Posterior cingulate gyrus (tissue), 11 donors: ENCODE measurements at regions of chr2 and their contacts with region 1.

Region 1: DNA sequence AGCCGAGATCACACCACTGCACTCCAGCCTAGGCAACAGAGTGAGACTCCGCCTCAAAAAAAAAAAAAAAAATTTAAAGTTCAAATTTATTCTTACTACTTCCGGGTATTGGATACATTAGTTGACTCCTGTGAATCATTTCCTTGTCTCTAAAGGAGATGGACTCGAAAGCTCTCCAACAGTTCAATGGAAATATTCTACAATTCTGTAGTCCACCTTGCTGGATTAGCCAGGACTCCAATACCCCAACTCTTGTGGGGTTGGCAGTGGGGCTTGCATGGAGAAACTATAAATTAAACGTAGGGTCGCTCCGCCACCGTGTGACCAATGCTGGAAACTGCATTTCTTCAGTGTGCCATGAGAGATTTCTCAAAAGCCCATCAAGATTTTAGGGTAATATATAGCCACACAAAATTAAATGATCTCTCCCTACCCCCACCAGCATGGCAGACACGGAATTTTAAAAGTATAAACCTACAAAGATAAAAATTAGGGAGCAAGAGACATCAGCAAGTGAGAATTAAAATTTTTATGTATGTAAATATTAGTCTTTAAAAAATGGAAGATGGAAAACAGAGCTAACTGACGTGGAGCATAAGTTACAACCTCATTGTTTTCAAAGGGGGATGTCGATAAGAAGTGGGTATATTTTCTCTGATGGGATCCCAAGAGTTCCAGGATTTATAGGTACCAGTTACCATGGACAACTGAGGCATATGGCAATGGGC is 27.8 kb upstream of the GAREM2 start:
- DNase-seq: peak; percentile 45 to 94 (median 74)

Region 2: DNA sequence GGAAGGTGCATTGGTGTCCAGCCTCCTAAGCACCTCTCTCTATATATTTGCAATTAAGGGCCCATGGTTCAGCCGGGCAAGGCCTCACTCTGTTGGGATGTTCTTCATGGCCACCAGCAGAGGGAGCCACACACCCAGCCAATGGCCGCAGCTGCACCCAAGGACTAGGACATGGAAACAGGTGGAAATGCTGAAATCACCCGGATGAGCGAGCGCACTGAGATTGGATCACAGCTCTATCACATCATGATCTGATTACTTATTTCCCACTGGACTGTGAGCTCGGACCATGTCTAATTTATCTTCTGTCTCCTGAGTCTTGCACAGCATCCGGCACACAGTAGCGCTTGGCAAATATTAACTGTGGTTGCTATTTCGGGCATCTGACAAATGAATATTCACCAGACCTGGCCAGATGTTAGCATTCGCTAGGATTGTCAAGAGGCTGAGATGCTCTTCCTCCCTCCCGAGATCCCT is 194.0 kb before region 1 on chr2:
- intact Hi-C with region 1: loop called (anchors 1 kb)
- DNase-seq: peak; percentile 85 to 98 (median 89)

Region 3: DNA sequence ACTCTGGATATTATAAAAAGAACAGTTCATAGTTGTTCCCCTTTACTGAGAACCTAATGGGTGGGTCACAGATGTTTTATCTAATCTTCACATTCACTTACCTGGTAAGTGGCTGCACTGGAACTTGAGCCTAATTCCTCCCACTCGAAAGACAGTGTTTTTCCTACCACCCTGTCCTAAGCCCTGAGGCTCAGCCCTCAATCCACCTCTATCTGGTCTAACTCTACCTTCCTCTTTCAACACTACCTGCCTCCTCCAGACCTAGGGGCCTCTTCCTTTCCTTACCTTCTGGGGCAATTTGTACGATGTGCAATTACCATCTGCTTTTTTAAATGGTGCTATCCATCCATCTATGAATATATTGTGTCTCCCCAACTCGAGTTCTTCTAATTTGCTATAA is 153.2 kb before region 1 on chr2:
- intact Hi-C with region 1: loop called (anchors 5 kb)
- DNase-seq: no peak

Region 4: GRCh38 chr2:26088032-26088643 is 57.0 kb before region 1 on chr2:
- intact Hi-C with region 1: loop called (anchors 1 kb)
- DNase-seq: peak in 3 of 10 donors; percentile 24 to 33 (median 29)

Region 5: DNA sequence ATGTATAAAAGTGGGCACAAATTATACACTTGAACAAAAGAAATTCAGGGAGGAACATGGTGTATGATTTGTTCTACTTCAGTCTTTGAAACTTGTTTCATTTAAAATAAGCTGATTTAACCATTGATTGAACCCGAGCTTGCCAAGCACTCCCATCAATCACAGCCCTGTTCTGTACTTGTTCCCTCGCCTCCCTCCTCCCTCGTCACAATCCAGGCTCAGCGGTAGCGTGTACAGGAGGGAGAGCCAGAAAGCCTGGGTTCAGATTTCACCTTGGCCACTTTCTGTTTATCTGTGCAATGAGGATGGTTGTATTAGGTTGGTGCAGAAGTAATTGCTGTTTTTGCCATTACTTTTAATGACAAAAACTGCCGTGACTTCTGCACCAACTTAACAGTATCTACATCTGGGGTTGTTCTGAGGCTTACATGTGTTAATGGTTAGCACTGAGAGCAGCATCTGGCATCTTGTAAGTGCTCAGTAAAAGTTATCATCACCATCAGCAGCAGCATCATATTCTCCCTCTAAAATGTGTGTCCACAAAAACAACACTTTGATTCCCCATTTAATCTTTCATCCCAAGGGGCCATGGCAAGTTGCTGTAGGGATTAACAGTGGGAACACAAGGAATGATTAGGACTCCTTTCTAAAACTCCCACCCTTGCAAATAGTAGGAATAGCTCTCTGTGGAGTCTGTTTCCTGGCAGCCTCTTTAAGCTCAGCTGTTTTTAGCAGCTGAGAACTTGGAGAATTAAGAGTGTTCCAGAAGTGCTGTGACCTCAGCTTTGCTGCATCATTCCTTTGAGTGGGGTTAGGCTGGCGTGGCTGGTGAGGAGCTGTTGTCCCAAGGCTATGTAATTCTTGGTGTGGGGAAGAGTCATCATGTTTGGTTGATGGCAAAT is 707.5 kb after region 1 on chr2:
- intact Hi-C with region 1: no loop called
- DNase-seq: peak in 2 of 10 donors; percentile 35 to 53